ENCODE measurements at regions of chr1 and their contacts with region 1.

Region 1: DNA sequence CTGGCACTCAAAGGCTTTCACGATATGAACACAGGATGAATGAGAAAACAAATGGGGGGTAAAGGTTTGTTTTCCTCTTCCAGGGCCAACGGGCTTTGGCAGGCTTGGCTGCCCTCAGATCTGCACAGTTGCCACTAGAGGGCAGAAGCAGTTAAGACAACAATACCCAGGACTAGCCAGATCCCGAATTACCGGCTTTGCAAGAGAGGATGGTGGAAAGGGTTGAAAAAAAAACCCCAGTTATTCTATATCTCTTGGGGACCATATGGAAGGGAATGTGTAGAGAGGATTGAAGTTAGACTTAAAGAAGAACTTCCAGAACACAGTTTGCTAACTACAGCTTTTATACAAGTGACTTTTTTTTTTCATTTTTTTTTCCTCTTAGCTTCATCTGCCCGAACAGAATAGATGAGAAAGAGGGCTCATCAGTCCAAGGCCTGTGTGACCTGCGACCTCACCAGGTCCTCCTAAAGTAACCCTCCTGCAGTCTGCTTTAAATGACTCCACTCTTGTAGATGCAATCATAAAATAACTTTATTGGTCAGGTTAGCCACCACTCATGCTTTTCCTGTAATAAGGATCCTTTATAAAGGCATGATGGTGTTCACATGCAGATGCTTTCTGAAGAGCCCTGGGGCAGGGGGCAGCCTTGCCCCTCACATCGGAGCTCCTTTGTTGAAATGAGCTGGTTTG is 10.7 kb downstream of the FMOD start:
- DNase-seq: peak; percentile 75
- ATAC-seq: peak; percentile 88
- H3K4me3 Mint-ChIP-seq: no peak overlapping the region
- H3K27ac Mint-ChIP-seq: no peak overlapping the region
- H3K4me1 Mint-ChIP-seq: peaks cover 18% of the 10 kb centered on the region
- H3K27me3 Mint-ChIP-seq: peaks cover 30% of the 10 kb centered on the region

Region 2: DNA sequence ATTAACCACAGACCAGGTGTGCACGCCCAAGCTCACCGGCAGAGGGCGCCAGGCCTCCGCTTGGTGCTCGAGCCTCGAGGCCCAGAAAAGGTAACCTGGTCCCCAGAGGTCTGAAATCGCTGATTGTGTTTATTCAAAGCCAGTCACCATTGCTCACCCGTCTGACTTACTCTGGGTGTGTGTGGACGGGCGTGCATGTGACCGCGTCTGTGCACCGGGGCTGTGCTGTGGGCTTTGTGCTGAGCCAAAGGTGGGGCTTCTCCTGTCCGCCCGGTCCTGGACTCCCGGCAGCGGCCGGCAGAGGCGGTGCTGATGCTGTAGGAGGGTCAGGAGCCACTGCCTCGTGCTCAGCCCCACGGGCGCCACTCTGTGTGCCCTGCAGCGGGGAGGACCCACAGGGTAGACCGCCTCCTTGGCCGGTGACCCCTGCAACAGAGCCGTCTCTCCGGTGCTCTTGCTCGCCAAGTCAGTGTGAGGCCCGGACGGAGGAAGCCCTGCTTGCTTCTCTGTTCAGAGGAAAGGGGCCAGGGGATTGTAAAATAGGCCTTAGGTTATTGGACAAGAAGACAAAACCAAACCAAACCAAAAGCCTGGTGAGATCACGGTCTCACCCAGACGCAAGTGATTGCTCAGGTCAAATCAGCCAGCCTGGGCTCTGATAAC is 66.9 kb before region 1 on chr1:
- CTCF ChIA-PET with region 1: interaction called, 841 read pairs
- POLR2A ChIA-PET with region 1: interaction called, 10 read pairs
- DNase-seq: peak; percentile 93
- ATAC-seq: peak; percentile 75
- H3K4me3 Mint-ChIP-seq: peak overlapping the region; percentile 70
- H3K27ac Mint-ChIP-seq: peak overlapping the region; percentile 82
- H3K4me1 Mint-ChIP-seq: peaks cover 75% of the 10 kb centered on the region
- H3K27me3 Mint-ChIP-seq: no peaks in the 10 kb centered on the region

Region 3: GRCh38 chr1:203304919-203305808 is 35.1 kb before region 1 on chr1 and contains the start of gene BTG2:
- CTCF ChIA-PET with region 1: interaction called, 153 read pairs
- POLR2A ChIA-PET with region 1: interaction called, 11 read pairs
- DNase-seq: peak; percentile 93
- ATAC-seq: peak; percentile 80
- H3K4me3 Mint-ChIP-seq: peak within 1 kb of the TSS; percentile 86
- H3K27ac Mint-ChIP-seq: peak within 1 kb of the TSS; percentile 89
- H3K4me1 Mint-ChIP-seq: peaks cover 67% of the 10 kb centered on the region
- H3K27me3 Mint-ChIP-seq: no peaks in the 10 kb centered on the region
- total RNA-seq, gene BTG2: 58.6 to 58.9 TPM

Region 4: GRCh38 chr1:203326830-203327683 is 13.2 kb before region 1 on chr1:
- CTCF ChIA-PET with region 1: interaction called, 145 read pairs
- POLR2A ChIA-PET with region 1: interaction called, 5 read pairs
- DNase-seq: peak; percentile 95
- ATAC-seq: peak; percentile 92
- H3K4me3 Mint-ChIP-seq: peak overlapping the region; percentile 73
- H3K27ac Mint-ChIP-seq: peak overlapping the region; percentile 93
- H3K4me1 Mint-ChIP-seq: peaks cover 66% of the 10 kb centered on the region
- H3K27me3 Mint-ChIP-seq: peaks cover 2% of the 10 kb centered on the region

Region 5: GRCh38 chr1:203475012-203475981 is 135.0 kb after region 1 on chr1 and contains the start of gene PRELP:
- CTCF ChIA-PET with region 1: interaction called, 22 read pairs
- POLR2A ChIA-PET with region 1: no interaction called
- DNase-seq: no peak
- ATAC-seq: no peak
- H3K4me3 Mint-ChIP-seq: no peak within 1 kb of the TSS
- H3K27ac Mint-ChIP-seq: no peak within 1 kb of the TSS
- H3K4me1 Mint-ChIP-seq: peaks cover 2% of the 10 kb centered on the region
- H3K27me3 Mint-ChIP-seq: peaks cover 15% of the 10 kb centered on the region
- total RNA-seq, gene PRELP: not detected